CD4-positive, alpha-beta T cell (primary cell): ENCODE measurements at regions of chrX and their contacts with region 1.

Region 1: GRCh38 chrX:76279000-76279399 is 106.1 kb downstream of the PBDC1 start:
- DNase-seq: peak in 13 of 14 experiments; percentile 8 to 64 (median 29)
- ATAC-seq: no peak
- H3K4me3 ChIP-seq: no peak overlapping the region
- H3K4me3 Mint-ChIP-seq: no peak overlapping the region
- H3K27ac ChIP-seq: no peak overlapping the region
- H3K27ac Mint-ChIP-seq: no peak overlapping the region
- H3K4me1 ChIP-seq: no peaks in the 10 kb centered on the region
- H3K4me1 Mint-ChIP-seq: no peaks in the 10 kb centered on the region
- H3K27me3 ChIP-seq: no peaks in the 10 kb centered on the region
- H3K27me3 Mint-ChIP-seq: no peaks in the 10 kb centered on the region
- CTCF ChIP-seq: peak; percentile 69

Region 2: GRCh38 chrX:76454456-76454927 is 175.5 kb after region 1 on chrX:
- CTCF ChIA-PET with region 1: interaction called, 10 read pairs
- POLR2A ChIA-PET with region 1: interaction called, 8 read pairs
- intact Hi-C with region 1: loop called (anchors 1 kb)
- DNase-seq: peak in 3 of 14 experiments; percentile 32 to 47 (median 45)
- ATAC-seq: peak; percentile 69
- H3K4me3 ChIP-seq: no peak overlapping the region
- H3K4me3 Mint-ChIP-seq: no peak overlapping the region
- H3K27ac ChIP-seq: no peak overlapping the region
- H3K27ac Mint-ChIP-seq: no peak overlapping the region
- H3K4me1 ChIP-seq: peaks cover 3% of the 10 kb centered on the region
- H3K4me1 Mint-ChIP-seq: peaks cover 7% of the 10 kb centered on the region
- H3K27me3 ChIP-seq: no peaks in the 10 kb centered on the region
- H3K27me3 Mint-ChIP-seq: no peaks in the 10 kb centered on the region
- CTCF ChIP-seq: peak; percentile 53

Region 3: GRCh38 chrX:78029663-78030062 is 1750.7 kb after region 1 on chrX:
- CTCF ChIA-PET with region 1: no interaction called
- POLR2A ChIA-PET with region 1: no interaction called
- intact Hi-C with region 1: loop called (anchors 10 kb)
- DNase-seq: peak in 4 of 14 experiments; percentile 0 to 11 (median 6)
- ATAC-seq: peak; percentile 34
- H3K4me3 ChIP-seq: no peak overlapping the region
- H3K4me3 Mint-ChIP-seq: no peak overlapping the region
- H3K27ac ChIP-seq: no peak overlapping the region
- H3K27ac Mint-ChIP-seq: no peak overlapping the region
- H3K4me1 ChIP-seq: no peaks in the 10 kb centered on the region
- H3K4me1 Mint-ChIP-seq: peaks cover under 1% of the 10 kb centered on the region
- H3K27me3 ChIP-seq: no peaks in the 10 kb centered on the region
- H3K27me3 Mint-ChIP-seq: no peaks in the 10 kb centered on the region
- CTCF ChIP-seq: no peak